IMR-90 (cell line): ENCODE measurements at regions of chr19 and their contacts with region 1.

Region 1: GRCh38 chr19:41528106-41528505 is 47.9 kb upstream of the CEACAM21 start:
- DNase-seq: no peak
- ATAC-seq: no peak
- H3K4me3 ChIP-seq: no peak overlapping the region
- H3K27ac ChIP-seq: no peak overlapping the region
- H3K4me1 ChIP-seq: no peaks in the 10 kb centered on the region
- H3K27me3 ChIP-seq: peaks cover 7% of the 10 kb centered on the region
- CTCF ChIP-seq: no peak
- POLR2A ChIP-seq: no peak
- RAD21 ChIP-seq: no peak

Region 2: DNA sequence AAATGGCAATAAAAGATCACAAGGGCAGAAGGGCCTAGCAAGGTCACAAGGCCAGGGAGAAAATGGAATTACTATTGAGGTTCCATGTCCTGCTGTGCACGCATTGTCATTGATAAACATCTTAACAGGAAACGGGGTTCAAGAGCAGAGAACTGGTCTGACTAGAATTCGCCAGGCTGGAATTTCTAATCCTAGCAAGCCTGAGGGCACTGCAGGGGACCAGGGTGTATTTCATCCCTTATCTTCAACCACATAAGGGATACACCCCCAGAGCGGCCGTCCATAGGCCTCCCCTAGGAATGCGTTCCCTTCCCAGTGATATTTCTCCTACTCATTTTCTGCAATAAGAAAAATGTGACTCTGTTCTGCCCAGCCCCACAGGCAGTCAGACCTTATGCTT is 65.6 kb before region 1 on chr19:
- CTCF ChIA-PET with region 1: no interaction called
- POLR2A ChIA-PET with region 1: no interaction called
- dilution Hi-C with region 1: no loop called
- in situ Hi-C with region 1: no loop called
- intact Hi-C with region 1: loop called (anchors 5 kb)
- DNase-seq: no peak
- ATAC-seq: no peak
- H3K4me3 ChIP-seq: no peak overlapping the region
- H3K27ac ChIP-seq: no peak overlapping the region
- H3K4me1 ChIP-seq: no peaks in the 10 kb centered on the region
- H3K27me3 ChIP-seq: peaks cover 2% of the 10 kb centered on the region; the same call in 1 of the 2 replicates
- CTCF ChIP-seq: no peak
- POLR2A ChIP-seq: no peak
- RAD21 ChIP-seq: no peak